WTC11 (cell line): ENCODE measurements at regions of chr7 and their contacts with region 1.

Region 1: GRCh38 chr7:74569501-74570075 is 87.9 kb upstream of the GTF2I start:
- DNase-seq: no peak
- ATAC-seq: no peak
- H3K4me3 Mint-ChIP-seq: no peak overlapping the region
- H3K27ac Mint-ChIP-seq: peak overlapping the region; percentile 12
- H3K4me1 Mint-ChIP-seq: peaks cover 6% of the 10 kb centered on the region
- H3K27me3 Mint-ChIP-seq: no peaks in the 10 kb centered on the region
- CTCF ChIP-seq: no peak

Region 2: DNA sequence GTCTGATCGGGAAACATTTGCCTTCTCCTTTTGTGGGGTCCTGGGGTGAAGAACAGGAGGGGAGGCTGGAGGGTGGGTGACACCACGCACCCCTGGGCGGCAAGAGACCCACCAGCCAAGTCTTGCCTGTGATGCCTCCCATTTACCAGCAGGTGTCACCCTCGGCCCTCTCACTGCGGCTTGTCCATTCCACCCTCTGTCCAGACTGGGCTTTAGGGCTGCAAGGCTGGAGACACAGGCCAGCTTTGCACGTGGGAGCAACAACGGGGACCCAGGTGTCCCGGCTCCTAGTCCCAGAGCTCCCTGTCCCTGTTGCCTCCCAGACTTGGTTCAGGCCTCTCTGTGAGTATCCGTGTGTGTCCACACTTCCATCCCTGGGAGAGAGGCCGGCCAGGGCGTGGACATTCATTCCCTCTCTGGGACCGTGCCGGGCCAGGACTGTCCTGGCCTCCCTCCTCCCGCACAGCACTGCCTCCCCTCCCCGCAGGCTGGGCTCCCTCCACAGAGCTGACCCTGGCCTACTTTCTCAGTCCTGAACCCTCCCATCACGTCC is 152.1 kb before region 1 on chr7:
- CTCF ChIA-PET with region 1: interaction called, 17 read pairs
- POLR2A ChIA-PET with region 1: no interaction called
- DNase-seq: peak; percentile 80
- ATAC-seq: peak; percentile 97
- H3K4me3 Mint-ChIP-seq: no peak overlapping the region
- H3K27ac Mint-ChIP-seq: no peak overlapping the region
- H3K4me1 Mint-ChIP-seq: no peaks in the 10 kb centered on the region
- H3K27me3 Mint-ChIP-seq: no peaks in the 10 kb centered on the region; the same call in 1 of the 2 replicates
- CTCF ChIP-seq: peak; percentile 96

Region 3: GRCh38 chr7:74554178-74554577 is 15.4 kb before region 1 on chr7:
- CTCF ChIA-PET with region 1: interaction called, 10 read pairs
- POLR2A ChIA-PET with region 1: no interaction called
- DNase-seq: no peak
- ATAC-seq: no peak
- H3K4me3 Mint-ChIP-seq: no peak overlapping the region
- H3K27ac Mint-ChIP-seq: no peak overlapping the region
- H3K4me1 Mint-ChIP-seq: no peaks in the 10 kb centered on the region
- H3K27me3 Mint-ChIP-seq: no peaks in the 10 kb centered on the region
- CTCF ChIP-seq: no peak

Region 4: DNA sequence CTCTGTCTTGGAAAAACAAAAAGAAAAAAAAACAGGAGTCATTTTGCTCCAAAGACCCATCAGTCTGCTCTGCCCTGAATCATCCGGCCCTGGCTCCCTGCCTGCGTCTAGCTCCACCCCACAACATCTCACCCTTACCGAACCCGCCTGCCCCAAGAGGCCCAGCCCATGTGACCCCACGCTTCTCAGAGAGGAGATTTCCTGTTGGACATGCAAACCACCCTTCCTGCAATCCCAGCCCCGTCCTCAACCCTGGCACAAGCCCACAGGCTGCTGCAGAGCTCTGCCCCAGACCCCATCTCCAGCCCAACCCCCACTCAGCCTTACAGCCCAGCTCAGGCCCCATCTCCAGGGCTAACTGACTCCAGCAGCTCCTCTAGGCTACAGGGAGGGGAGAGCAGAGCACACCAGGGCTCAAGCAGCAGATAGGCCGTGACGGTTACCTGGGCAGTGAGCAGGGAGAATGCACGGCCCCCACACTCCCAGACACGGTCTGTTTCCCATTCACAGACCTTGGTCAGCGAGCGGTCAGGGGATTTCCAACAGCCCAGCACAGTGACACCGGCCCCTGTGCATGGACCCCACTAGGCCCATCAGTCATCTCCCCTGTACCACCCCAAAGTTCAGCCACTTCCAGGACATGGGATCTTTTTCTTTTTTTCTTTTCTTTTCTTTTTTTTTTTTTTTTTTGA is 18.0 kb after region 1 on chr7:
- CTCF ChIA-PET with region 1: interaction called, 14 read pairs
- POLR2A ChIA-PET with region 1: no interaction called
- DNase-seq: peak; percentile 64
- ATAC-seq: peak; percentile 93
- H3K4me3 Mint-ChIP-seq: no peak overlapping the region
- H3K27ac Mint-ChIP-seq: peak overlapping the region; percentile 93
- H3K4me1 Mint-ChIP-seq: peaks cover 25% of the 10 kb centered on the region
- H3K27me3 Mint-ChIP-seq: no peaks in the 10 kb centered on the region
- CTCF ChIP-seq: no peak